PC-3 (cell line): ENCODE measurements at regions of chr1 and their contacts with region 1.

Region 1: GRCh38 chr1:103106426-103107341 is 1.6 kb downstream of the COL11A1 start:
- DNase-seq: peak; percentile 70
- ATAC-seq: peak; percentile 78
- H3K4me3 ChIP-seq: peak overlapping the region; percentile 7
- H3K27ac ChIP-seq: no peak overlapping the region
- H3K4me1 ChIP-seq: no peaks in the 10 kb centered on the region; the same call in 1 of the 2 replicates
- H3K27me3 ChIP-seq: peaks cover 33% of the 10 kb centered on the region
- CTCF ChIP-seq: peak; percentile 75

Region 2: GRCh38 chr1:103063921-103064320 is 42.8 kb before region 1 on chr1:
- CTCF ChIA-PET with region 1: no interaction called
- POLR2A ChIA-PET with region 1: no interaction called
- intact Hi-C with region 1: no loop called
- DNase-seq: no peak
- ATAC-seq: no peak
- H3K4me3 ChIP-seq: no peak overlapping the region
- H3K27ac ChIP-seq: no peak overlapping the region
- H3K4me1 ChIP-seq: no peaks in the 10 kb centered on the region
- H3K27me3 ChIP-seq: peaks cover 32% of the 10 kb centered on the region; the same call in 1 of the 2 replicates
- CTCF ChIP-seq: no peak

Region 3: GRCh38 chr1:103461161-103462105 is 354.7 kb after region 1 on chr1:
- CTCF ChIA-PET with region 1: interaction called, 21 read pairs
- POLR2A ChIA-PET with region 1: no interaction called
- intact Hi-C with region 1: loop called (anchors 1 kb)
- DNase-seq: peak; percentile 41
- ATAC-seq: peak; percentile 43; the same call in 1 of the 2 replicates
- H3K4me3 ChIP-seq: no peak overlapping the region
- H3K27ac ChIP-seq: no peak overlapping the region
- H3K4me1 ChIP-seq: no peaks in the 10 kb centered on the region
- H3K27me3 ChIP-seq: peaks cover 31% of the 10 kb centered on the region
- CTCF ChIP-seq: peak; percentile 72

Region 4: DNA sequence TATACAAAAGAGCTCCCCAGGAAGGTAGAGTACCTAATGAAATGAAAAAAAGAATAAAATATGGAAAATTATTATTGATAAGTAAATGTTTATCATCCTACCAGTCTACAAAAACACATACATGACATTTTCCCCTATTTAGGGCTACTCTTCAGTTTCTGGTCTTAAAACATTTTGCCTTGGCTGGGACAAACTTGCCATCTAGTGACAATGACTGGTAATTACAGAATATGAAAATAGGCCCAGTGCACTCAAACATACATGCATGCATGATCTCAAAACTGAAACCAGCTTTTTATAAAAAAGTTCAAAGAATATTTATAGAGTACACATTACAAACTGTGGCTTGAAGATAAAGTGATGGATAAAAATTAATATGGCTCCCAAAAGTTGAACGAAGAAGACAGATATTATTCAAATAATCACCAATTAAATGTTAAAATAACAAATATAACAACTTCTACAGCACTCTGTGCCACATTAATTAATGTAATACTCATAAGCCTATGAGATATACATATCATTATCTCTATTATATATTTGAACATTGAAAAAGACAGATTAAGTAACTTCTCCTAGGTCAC is 408.3 kb after region 1 on chr1:
- CTCF ChIA-PET with region 1: no interaction called
- POLR2A ChIA-PET with region 1: no interaction called
- intact Hi-C with region 1: loop called (anchors 1 kb)
- DNase-seq: peak; percentile 67
- ATAC-seq: 0 out of 2 replicates have a peak, but pooled peaks have one; percentile 29
- H3K4me3 ChIP-seq: no peak overlapping the region
- H3K27ac ChIP-seq: no peak overlapping the region
- H3K4me1 ChIP-seq: peaks cover 18% of the 10 kb centered on the region
- H3K27me3 ChIP-seq: no peaks in the 10 kb centered on the region
- CTCF ChIP-seq: peak; percentile 83